CD8-positive, alpha-beta T cell (primary cell): ENCODE measurements at regions of chr6 and their contacts with region 1.

Region 1: GRCh38 chr6:139369568-139370282 is 4.7 kb downstream of the CITED2 start:
- DNase-seq: peak in 2 of 9 experiments; percentile 56 to 69
- ATAC-seq: no peak
- H3K4me3 ChIP-seq: no peak overlapping the region
- H3K4me3 Mint-ChIP-seq: peak overlapping the region; percentile 66
- H3K27ac ChIP-seq: peak overlapping the region in 1 of 2 experiments; percentile 86
- H3K27ac Mint-ChIP-seq: peak overlapping the region; percentile 98
- H3K4me1 ChIP-seq: peaks cover 31% of the 10 kb centered on the region
- H3K4me1 Mint-ChIP-seq: peaks cover 49% of the 10 kb centered on the region
- H3K27me3 ChIP-seq: no peaks in the 10 kb centered on the region
- H3K27me3 Mint-ChIP-seq: no peaks in the 10 kb centered on the region
- CTCF ChIP-seq: peak; percentile 88

Region 2: DNA sequence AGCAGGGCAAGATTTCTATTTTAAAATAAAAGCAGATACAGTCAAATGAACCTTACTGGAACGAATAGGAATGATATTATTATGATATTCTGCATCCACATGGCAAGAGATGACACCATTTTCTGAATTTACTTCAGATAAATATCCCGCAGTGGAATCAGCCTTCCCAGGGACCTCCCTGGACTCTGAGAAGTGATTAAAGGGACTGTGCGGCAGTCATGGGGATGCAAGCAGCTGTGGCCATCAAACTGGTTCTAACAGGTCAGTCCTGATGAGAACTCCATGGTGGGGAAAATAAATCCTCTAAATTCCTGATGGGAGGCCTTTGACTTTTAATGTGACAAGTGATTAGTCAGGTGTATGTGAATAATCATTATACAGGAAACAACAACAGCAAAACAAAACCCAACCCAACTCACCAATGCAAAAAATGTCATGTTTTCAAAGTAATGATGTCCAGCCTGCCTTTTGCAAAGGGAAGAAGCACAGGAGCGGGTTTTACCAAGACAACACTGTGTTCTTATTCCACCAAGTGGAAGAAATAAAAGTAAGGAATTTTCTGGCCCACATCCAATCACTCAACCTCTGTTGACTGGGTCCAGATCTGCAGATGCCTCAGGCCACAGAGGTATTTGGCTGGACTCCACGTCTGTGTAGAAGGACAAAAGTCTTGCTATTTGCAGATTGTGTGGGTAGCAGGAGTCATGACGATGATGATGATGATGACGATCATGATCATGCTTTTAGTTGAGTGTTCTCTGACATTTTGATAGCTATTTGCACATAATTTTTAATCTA is 66.7 kb after region 1 on chr6:
- CTCF ChIA-PET with region 1: no interaction called
- POLR2A ChIA-PET with region 1: no interaction called
- intact Hi-C with region 1: no loop called
- DNase-seq: no peak
- ATAC-seq: no peak
- H3K4me3 ChIP-seq: no peak overlapping the region
- H3K4me3 Mint-ChIP-seq: no peak overlapping the region
- H3K27ac ChIP-seq: no peak overlapping the region
- H3K27ac Mint-ChIP-seq: no peak overlapping the region
- H3K4me1 ChIP-seq: no peaks in the 10 kb centered on the region
- H3K4me1 Mint-ChIP-seq: peaks cover 2% of the 10 kb centered on the region
- H3K27me3 ChIP-seq: no peaks in the 10 kb centered on the region
- H3K27me3 Mint-ChIP-seq: no peaks in the 10 kb centered on the region
- CTCF ChIP-seq: no peak

Region 3: GRCh38 chr6:139927236-139927635 is 557.5 kb after region 1 on chr6:
- CTCF ChIA-PET with region 1: interaction called, 5 read pairs
- POLR2A ChIA-PET with region 1: no interaction called
- intact Hi-C with region 1: loop called in 1 of 2 experiments (anchors 1 kb)
- DNase-seq: peak in 2 of 9 experiments; percentile 6 to 17
- ATAC-seq: no peak
- H3K4me3 ChIP-seq: no peak overlapping the region
- H3K4me3 Mint-ChIP-seq: no peak overlapping the region
- H3K27ac ChIP-seq: no peak overlapping the region
- H3K27ac Mint-ChIP-seq: no peak overlapping the region
- H3K4me1 ChIP-seq: no peaks in the 10 kb centered on the region
- H3K4me1 Mint-ChIP-seq: no peaks in the 10 kb centered on the region
- H3K27me3 ChIP-seq: no peaks in the 10 kb centered on the region
- H3K27me3 Mint-ChIP-seq: peaks cover 3% of the 10 kb centered on the region
- CTCF ChIP-seq: no peak